PC-9 (cell line): ENCODE measurements at regions of chr14 and their contacts with region 1.

Region 1: DNA sequence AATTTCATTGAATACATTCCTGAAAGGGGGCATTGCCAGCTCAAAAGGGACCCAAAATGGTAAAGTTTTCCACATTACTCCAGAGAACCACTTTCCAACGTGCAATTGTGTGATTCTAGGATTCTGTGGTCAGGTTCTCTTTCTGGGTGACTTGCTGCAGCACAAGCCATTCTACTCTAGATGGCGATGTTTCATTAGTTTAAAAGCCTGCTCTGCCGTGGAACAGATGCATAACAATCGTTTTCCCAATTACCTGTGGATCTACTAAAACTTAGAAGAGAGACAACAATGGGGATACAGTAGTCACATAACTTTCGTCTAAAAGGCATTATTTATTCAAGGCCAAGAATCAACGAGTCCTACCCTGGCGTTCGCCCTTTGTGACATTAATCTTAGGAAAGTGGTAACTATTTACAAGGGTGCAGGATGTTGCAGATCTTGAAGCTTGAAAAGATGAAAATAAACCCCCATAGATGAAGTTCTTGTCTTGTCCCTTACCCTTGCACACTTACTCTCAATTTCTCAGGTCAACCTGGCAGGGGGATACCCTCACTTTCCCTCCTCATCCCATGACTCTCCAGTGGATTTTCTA is 400.9 kb downstream of the SNAPC1 start:
- DNase-seq: peak; percentile 37 to 47
- H3K4me3 ChIP-seq: no peak overlapping the region
- H3K27ac ChIP-seq: no peak overlapping the region
- H3K4me1 ChIP-seq: no peaks in the 10 kb centered on the region
- H3K27me3 ChIP-seq: peaks cover 8% of the 10 kb centered on the region; the same call in 1 of the 2 replicates
- CTCF ChIP-seq: peak; percentile 89

Region 2: GRCh38 chr14:61269321-61270083 is 893.6 kb before region 1 on chr14:
- CTCF ChIA-PET with region 1: no interaction called
- POLR2A ChIA-PET with region 1: no interaction called
- intact Hi-C with region 1: loop called (anchors 1 kb)
- DNase-seq: peak; percentile 71 to 80
- H3K4me3 ChIP-seq: peak overlapping the region; percentile 58
- H3K27ac ChIP-seq: no peak overlapping the region
- H3K4me1 ChIP-seq: no peaks in the 10 kb centered on the region
- H3K27me3 ChIP-seq: no peaks in the 10 kb centered on the region
- CTCF ChIP-seq: peak; percentile 92

Region 3: DNA sequence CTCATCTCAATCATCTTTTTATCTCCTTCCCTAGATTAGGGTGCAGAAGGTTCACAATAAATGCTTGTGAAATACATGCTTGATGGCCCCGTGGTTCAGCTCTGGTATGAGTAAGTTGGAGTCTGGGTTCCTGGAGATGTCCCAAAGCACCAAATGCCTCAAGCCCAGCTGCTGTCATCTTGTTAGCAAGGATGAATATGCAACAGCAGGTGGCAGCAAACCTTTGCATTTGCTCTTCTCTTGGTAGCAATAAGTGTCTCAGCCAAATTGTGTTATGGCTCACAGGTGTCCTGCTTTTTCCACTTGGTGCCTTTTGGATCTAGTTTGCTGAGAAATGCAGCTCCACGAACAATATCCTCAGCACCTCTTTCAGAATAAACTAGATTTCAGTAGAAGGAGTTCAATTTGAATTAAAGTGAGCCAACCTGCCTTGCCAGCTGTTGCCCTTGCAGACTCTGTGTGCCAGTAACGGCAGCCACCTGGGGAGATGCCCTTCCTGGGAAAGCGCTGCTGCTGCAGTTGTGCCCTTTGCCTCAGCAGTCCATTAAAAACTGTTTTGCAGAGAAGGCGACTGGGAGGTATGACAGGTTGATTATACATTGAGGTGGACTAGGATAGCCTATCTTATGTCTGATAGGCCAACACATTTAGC is 16.4 kb after region 1 on chr14:
- CTCF ChIA-PET with region 1: no interaction called
- POLR2A ChIA-PET with region 1: no interaction called
- intact Hi-C with region 1: no loop called
- DNase-seq: peak; percentile 46 to 55
- H3K4me3 ChIP-seq: no peak overlapping the region
- H3K27ac ChIP-seq: no peak overlapping the region
- H3K4me1 ChIP-seq: no peaks in the 10 kb centered on the region
- H3K27me3 ChIP-seq: peaks cover 2% of the 10 kb centered on the region; the same call in 1 of the 2 replicates
- CTCF ChIP-seq: peak; percentile 81

Region 4: DNA sequence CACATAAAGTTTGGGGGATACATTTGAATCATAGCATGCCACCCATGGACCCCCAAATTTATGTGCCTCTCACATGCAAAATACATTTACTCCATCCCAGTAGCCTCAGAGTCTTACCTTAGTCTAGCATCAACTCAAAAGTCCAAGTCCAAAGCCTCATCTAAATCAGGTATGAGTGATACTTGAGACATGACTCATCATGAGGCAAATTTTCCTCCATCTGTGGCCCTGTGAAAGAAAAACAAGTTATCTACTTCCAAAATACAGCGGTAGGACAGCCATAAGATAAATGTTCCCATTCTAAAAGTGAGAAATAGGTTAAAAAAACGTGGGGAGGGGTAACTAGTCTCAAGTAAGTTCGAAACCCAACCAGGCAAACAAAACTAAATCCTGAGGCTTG is 43.4 kb after region 1 on chr14:
- CTCF ChIA-PET with region 1: no interaction called
- POLR2A ChIA-PET with region 1: no interaction called
- intact Hi-C with region 1: no loop called
- DNase-seq: no peak
- H3K4me3 ChIP-seq: no peak overlapping the region
- H3K27ac ChIP-seq: no peak overlapping the region
- H3K4me1 ChIP-seq: no peaks in the 10 kb centered on the region
- H3K27me3 ChIP-seq: no peaks in the 10 kb centered on the region
- CTCF ChIP-seq: no peak

Region 5: GRCh38 chr14:63039800-63040380 is 876.8 kb after region 1 on chr14:
- CTCF ChIA-PET with region 1: no interaction called
- POLR2A ChIA-PET with region 1: no interaction called
- intact Hi-C with region 1: loop called (anchors 5 kb)
- DNase-seq: peak; percentile 27 to 78
- H3K4me3 ChIP-seq: no peak overlapping the region
- H3K27ac ChIP-seq: no peak overlapping the region
- H3K4me1 ChIP-seq: no peaks in the 10 kb centered on the region
- H3K27me3 ChIP-seq: no peaks in the 10 kb centered on the region
- CTCF ChIP-seq: peak; percentile 64

Region 6: DNA sequence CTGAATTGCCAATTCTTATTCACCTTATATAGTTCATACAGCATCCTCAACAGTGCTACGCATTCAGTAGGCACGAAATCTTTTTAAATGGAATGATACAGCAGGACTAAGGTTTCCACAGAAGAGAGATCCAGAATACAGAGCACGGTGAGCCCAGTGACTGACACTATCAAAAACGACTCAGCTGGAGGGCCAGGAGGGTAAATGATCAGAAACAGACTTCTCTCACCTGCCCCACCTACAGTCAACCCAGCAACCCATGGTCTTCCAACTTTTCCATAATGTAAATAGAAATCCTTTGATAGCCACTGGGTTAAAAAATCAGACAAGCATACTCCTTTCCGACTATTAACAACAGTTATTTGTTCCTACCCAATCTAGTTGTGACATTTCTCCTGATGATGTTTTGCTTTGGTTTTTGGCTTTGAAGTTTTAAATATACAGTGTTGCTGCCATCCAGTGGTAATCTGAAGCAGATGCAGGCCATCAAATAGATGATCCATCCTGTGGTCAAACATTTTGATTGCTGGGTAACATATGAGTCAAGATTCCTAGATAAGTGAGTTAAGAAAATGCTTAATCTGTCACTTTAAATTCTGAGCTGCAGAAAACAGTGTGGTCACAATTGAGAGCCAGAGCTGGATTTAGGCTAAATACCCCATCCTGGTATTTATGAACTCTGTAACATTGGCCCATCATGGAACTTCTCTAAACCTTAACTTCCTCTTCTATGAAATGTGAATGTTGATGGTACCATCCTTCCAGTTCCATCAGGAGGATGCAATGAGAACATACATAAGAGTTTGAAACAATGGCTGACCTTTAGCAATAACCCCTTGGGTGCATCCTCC is 1113.6 kb after region 1 on chr14:
- CTCF ChIA-PET with region 1: no interaction called
- POLR2A ChIA-PET with region 1: no interaction called
- intact Hi-C with region 1: loop called (anchors 1 kb)
- DNase-seq: peak; percentile 3 to 47
- H3K4me3 ChIP-seq: no peak overlapping the region
- H3K27ac ChIP-seq: no peak overlapping the region
- H3K4me1 ChIP-seq: no peaks in the 10 kb centered on the region
- H3K27me3 ChIP-seq: no peaks in the 10 kb centered on the region
- CTCF ChIP-seq: peak; percentile 92

Region 7: GRCh38 chr14:63308723-63309317 is 1145.7 kb after region 1 on chr14:
- CTCF ChIA-PET with region 1: no interaction called
- POLR2A ChIA-PET with region 1: no interaction called
- intact Hi-C with region 1: loop called (anchors 1 kb)
- DNase-seq: peak in 1 of 2 experiments; percentile 31
- H3K4me3 ChIP-seq: no peak overlapping the region
- H3K27ac ChIP-seq: no peak overlapping the region
- H3K4me1 ChIP-seq: no peaks in the 10 kb centered on the region
- H3K27me3 ChIP-seq: 0 out of 2 replicates have a peak, but pooled peaks cover 3% of the 10 kb centered on the region
- CTCF ChIP-seq: peak; percentile 73

Region 8: DNA sequence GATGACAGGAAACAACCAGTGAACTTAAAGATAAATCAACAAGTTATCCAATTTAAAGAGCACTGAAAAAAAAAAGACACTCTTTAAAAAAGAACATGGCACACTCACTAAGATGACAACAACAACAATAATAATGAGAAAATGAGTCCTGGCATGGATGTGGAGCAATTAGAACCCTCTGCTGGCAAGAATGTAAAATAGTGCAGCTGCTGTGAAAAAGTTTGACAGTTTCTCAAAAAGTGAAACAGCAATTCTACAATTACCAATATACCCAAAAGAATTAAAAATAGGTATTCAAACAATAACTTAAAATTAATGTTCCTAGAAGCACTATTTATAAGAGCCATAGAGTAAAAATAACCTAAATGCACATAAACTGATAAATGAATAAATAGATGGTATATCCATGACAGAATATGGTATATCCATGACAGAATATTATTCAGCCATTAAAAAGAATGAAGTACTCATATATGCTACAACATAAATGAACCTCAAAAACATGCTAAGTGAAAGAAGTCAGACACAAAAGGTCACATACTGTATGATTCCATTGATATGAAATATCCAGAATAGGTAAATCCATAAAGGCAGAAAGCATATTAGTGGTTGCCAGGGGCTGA is 1204.8 kb after region 1 on chr14:
- CTCF ChIA-PET with region 1: no interaction called
- POLR2A ChIA-PET with region 1: no interaction called
- intact Hi-C with region 1: loop called (anchors 5 kb)
- DNase-seq: no peak
- H3K4me3 ChIP-seq: no peak overlapping the region
- H3K27ac ChIP-seq: no peak overlapping the region
- H3K4me1 ChIP-seq: no peaks in the 10 kb centered on the region
- H3K27me3 ChIP-seq: no peaks in the 10 kb centered on the region
- CTCF ChIP-seq: no peak